Testis (tissue), 5 donors: ENCODE measurements at regions of chr1 and their contacts with region 1.

Region 1: GRCh38 chr1:6727535-6727934 is 25.9 kb upstream of the DNAJC11 start:
- DNase-seq: peak; percentile 59
- H3K4me3 ChIP-seq: no peak overlapping the region
- H3K27ac ChIP-seq: no peak overlapping the region
- H3K4me1 ChIP-seq: peaks cover 6% of the 10 kb centered on the region
- H3K27me3 ChIP-seq: no peaks in the 10 kb centered on the region
- CTCF ChIP-seq: peak; percentile 38 to 93 (median 80)
- POLR2A ChIP-seq: no peak

Region 2: GRCh38 chr1:6762060-6762459 is 34.5 kb after region 1 on chr1:
- intact Hi-C with region 1: no loop called
- DNase-seq: no peak
- H3K4me3 ChIP-seq: no peak overlapping the region
- H3K27ac ChIP-seq: no peak overlapping the region
- H3K4me1 ChIP-seq: no peaks in the 10 kb centered on the region
- H3K27me3 ChIP-seq: no peaks in the 10 kb centered on the region
- CTCF ChIP-seq: no peak
- POLR2A ChIP-seq: no peak

Region 3: DNA sequence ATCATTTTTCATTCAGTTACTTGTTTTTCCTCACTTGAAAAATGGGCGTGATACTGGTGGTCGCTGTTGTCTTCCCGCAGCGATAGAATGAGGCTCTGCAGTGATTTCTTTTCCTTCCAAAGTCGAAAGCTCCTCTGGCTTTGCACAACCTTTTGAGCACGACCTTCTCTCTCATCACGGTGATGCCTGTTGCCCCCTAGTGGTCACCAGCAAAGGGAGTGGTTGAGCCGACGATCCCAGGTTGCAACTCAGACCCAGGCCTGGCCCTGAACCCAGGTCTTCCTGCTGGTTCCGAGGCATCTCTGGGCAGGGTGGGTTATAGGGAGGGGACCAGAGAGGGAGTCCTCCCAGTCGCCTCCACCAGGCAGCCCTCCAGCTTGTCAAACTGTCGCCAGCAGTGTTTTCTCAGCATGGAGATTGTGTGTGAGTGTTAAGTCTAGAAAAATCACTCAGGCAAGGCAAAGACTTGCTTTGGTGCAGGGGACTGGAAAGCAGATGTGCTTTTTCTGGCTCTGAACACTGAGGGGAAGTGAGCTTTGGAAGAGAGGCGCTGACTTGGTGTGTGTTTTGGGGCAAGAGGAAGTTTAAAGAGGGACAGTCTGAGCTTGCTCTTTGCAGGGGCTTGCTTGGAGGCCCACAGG is 343.0 kb after region 1 on chr1:
- intact Hi-C with region 1: loop called (anchors 10 kb)
- DNase-seq: peak; percentile 84
- H3K4me3 ChIP-seq: peak overlapping the region; percentile 27 to 40
- H3K27ac ChIP-seq: no peak overlapping the region
- H3K4me1 ChIP-seq: no peaks in the 10 kb centered on the region
- H3K27me3 ChIP-seq: no peaks in the 10 kb centered on the region
- CTCF ChIP-seq: peak; percentile 55 to 89 (median 77)
- POLR2A ChIP-seq: no peak

Region 4: GRCh38 chr1:7218210-7218832 is 490.8 kb after region 1 on chr1:
- intact Hi-C with region 1: loop called (anchors 10 kb)
- DNase-seq: peak; percentile 62
- H3K4me3 ChIP-seq: no peak overlapping the region
- H3K27ac ChIP-seq: no peak overlapping the region
- H3K4me1 ChIP-seq: no peaks in the 10 kb centered on the region
- H3K27me3 ChIP-seq: no peaks in the 10 kb centered on the region
- CTCF ChIP-seq: peak; percentile 61 to 77 (median 68)
- POLR2A ChIP-seq: no peak